Colonic mucosa (tissue), 4 donors: ENCODE measurements at regions of chr5 and their contacts with region 1.

Region 1: DNA sequence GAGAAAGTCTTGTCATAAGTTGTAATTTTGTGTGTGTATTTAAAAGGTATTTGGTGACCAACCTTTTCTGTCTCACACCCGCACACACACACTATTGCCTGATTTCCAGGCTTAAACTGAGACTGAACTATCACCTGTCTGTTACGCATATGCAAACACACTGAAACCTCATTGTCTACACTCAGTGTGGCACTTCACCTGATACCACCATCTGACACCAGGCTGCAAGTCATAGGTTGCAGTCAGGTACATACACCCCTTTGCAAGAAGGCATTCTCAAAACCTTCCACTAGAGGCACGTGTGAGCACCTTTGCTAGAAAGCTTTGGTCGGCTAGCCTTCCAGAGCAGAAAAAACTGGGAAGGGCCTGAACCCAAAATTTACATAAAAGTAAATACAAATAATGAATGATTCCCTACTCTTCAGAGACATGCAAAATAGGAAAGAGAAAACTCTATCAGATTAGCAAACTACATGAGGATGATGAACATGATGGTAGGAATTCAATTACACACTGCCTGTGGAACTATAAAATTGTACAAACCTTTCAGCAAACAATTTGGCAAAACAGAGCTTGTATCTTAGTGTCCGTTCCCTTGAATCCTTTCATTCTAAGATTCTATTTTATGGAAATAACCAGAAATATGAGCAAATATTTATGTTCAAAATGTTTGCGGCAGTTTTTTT is 5.9 kb upstream of the FOXD1 start:
- DNase-seq: peak; percentile 69
- H3K4me3 ChIP-seq: no peak overlapping the region
- H3K27ac ChIP-seq: no peak overlapping the region
- H3K4me1 ChIP-seq: peaks cover 5% of the 10 kb centered on the region
- H3K27me3 ChIP-seq: peaks cover 55% of the 10 kb centered on the region
- CTCF ChIP-seq: peak; percentile 67

Region 2: DNA sequence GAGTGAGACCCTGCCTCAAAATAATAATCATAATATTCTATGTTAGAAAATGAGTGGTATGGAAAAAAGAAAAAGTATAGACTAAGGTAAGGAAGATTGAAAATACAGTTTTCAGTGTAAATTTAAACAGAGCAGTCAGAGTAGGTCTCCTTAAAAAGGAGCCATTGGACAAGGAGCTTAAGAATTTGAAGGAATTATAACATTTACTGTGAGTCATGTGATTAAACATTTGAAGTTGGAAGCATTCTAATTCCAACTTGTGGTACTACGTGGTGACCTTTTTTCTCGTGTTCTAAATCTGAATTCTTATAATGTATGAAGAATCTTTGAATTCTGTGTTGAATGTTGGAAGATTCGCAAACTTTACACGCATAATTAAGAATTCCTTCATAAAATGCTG is 373.4 kb before region 1 on chr5:
- intact Hi-C with region 1: loop called (anchors 5 kb)
- DNase-seq: no peak
- H3K4me3 ChIP-seq: no peak overlapping the region
- H3K27ac ChIP-seq: no peak overlapping the region
- H3K4me1 ChIP-seq: no peaks in the 10 kb centered on the region
- H3K27me3 ChIP-seq: no peaks in the 10 kb centered on the region
- CTCF ChIP-seq: no peak

Region 3: GRCh38 chr5:73215891-73216610 is 238.4 kb before region 1 on chr5:
- intact Hi-C with region 1: loop called (anchors 5 kb)
- DNase-seq: peak; percentile 87
- H3K4me3 ChIP-seq: peak overlapping the region; percentile 33
- H3K27ac ChIP-seq: no peak overlapping the region
- H3K4me1 ChIP-seq: no peaks in the 10 kb centered on the region
- H3K27me3 ChIP-seq: peaks cover 40% of the 10 kb centered on the region
- CTCF ChIP-seq: peak; percentile 80

Region 4: GRCh38 chr5:73298772-73299630 is 155.5 kb before region 1 on chr5:
- intact Hi-C with region 1: loop called (anchors 5 kb)
- DNase-seq: no peak
- H3K4me3 ChIP-seq: no peak overlapping the region
- H3K27ac ChIP-seq: no peak overlapping the region
- H3K4me1 ChIP-seq: peaks cover 8% of the 10 kb centered on the region
- H3K27me3 ChIP-seq: peaks cover 88% of the 10 kb centered on the region
- CTCF ChIP-seq: peak; percentile 28

Region 5: DNA sequence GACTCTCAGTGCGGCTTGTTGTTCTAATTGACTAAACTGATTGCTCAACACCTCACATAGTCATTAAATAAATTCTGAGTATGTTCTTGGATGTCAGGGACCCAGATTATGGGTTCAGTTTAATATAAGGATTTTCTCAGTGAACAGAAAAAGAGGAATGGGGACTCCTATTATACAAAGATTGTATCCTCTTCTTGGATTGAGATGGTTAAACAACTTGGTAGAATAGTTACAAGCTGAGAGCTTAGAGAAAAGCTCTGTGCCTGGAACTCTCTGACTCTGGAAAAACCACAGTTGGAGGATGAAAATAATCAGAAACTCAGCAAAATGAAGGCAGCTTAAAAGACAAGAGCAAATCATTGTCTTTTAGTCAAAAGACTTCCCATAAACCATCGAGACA is 80.5 kb after region 1 on chr5:
- intact Hi-C with region 1: loop called (anchors 5 kb)
- DNase-seq: no peak
- H3K4me3 ChIP-seq: no peak overlapping the region
- H3K27ac ChIP-seq: no peak overlapping the region
- H3K4me1 ChIP-seq: no peaks in the 10 kb centered on the region
- H3K27me3 ChIP-seq: no peaks in the 10 kb centered on the region
- CTCF ChIP-seq: no peak

Region 6: GRCh38 chr5:73783828-73784227 is 329.3 kb after region 1 on chr5:
- intact Hi-C with region 1: no loop called
- DNase-seq: no peak
- H3K4me3 ChIP-seq: no peak overlapping the region
- H3K27ac ChIP-seq: no peak overlapping the region
- H3K4me1 ChIP-seq: no peaks in the 10 kb centered on the region
- H3K27me3 ChIP-seq: no peaks in the 10 kb centered on the region
- CTCF ChIP-seq: no peak